ENCODE measurements at regions of chr4 and their contacts with region 1.

Region 1: DNA sequence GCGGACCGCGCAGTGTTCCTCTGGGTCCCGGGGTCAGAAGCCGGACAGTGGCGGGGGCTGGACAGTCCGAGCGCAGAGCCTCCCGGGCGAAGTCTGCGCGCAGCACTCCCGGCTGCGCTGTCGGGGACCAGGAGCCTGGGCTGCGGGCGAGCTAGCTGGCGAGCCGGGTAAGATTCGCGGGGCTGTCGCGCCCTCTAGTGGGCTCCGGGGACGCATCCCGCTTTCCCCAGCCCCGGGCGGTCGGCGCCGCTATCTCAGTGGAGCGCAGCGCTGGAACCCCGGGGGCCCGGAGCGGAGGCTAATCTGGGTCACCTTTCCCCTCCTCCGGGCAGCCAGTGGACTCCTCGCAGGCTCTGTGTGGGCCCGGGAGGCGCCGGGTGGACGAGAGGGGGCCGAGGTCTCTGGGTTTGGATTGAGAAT is 4.2 kb downstream of the PDGFRA start:
- DNase-seq: peak; percentile 83
- H3K27ac ChIP-seq: no peak overlapping the region
- CTCF ChIP-seq: peak; percentile 73

Region 2: DNA sequence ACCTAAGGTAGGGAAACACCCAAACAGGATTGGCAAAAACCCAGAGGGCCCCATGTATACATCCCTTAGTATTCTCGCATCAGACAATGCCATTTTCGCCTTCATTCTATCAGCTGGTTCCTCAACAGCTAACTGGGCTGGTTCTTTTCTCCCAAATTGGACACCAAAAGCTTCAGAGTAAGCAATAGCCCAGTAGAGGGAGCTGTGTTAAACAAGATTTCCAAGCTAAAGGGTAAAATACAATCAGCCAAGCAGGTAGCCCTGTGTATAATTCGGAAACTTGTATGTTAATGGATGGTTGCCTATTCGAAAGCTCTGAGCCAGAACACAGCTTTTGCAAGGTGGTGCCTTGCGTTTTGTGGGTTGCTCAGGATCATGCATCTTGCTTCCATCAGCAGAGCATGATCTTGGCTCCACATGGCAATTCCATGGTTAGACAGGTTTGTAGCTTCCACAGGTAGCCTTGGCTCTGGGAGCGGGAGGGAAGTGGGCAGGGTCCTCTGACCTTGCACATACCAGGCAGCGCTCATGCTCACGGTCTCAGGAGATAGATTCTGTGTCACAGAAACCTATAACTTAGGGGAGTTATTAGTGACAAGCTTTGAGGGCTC is 526.8 kb before region 1 on chr4:
- CTCF ChIA-PET with region 1: interaction called, 17 read pairs
- POLR2A ChIA-PET with region 1: no interaction called
- DNase-seq: peak; percentile 30
- H3K27ac ChIP-seq: no peak overlapping the region
- CTCF ChIP-seq: peak; percentile 31

Region 3: GRCh38 chr4:53908661-53909078 is 324.6 kb before region 1 on chr4:
- CTCF ChIA-PET with region 1: interaction called, 28 read pairs
- POLR2A ChIA-PET with region 1: no interaction called
- DNase-seq: peak; percentile 77
- H3K27ac ChIP-seq: no peak overlapping the region
- CTCF ChIP-seq: peak; percentile 78

Region 4: DNA sequence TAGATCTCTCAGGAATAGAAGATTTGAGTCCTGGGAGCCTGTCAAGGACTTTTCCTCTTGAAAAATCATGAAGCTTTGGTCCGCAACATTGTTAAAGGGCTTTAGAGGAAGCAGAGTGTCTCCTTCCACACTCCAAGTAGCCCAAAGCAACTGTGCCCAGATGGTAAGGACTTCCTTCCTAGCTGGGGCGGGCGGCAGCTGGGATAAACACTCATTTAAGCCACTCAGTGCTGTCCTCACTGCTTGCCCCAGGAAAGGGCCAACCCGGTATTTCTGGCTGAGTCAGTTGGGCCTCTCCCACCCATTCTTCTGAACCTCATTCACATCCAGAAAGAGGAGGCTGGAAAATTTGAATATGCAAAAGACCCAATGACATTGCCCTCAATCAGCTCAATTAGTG is 313.2 kb before region 1 on chr4:
- CTCF ChIA-PET with region 1: interaction called, 10 read pairs
- POLR2A ChIA-PET with region 1: no interaction called
- DNase-seq: no peak
- H3K27ac ChIP-seq: no peak overlapping the region
- CTCF ChIP-seq: no peak

Region 5: DNA sequence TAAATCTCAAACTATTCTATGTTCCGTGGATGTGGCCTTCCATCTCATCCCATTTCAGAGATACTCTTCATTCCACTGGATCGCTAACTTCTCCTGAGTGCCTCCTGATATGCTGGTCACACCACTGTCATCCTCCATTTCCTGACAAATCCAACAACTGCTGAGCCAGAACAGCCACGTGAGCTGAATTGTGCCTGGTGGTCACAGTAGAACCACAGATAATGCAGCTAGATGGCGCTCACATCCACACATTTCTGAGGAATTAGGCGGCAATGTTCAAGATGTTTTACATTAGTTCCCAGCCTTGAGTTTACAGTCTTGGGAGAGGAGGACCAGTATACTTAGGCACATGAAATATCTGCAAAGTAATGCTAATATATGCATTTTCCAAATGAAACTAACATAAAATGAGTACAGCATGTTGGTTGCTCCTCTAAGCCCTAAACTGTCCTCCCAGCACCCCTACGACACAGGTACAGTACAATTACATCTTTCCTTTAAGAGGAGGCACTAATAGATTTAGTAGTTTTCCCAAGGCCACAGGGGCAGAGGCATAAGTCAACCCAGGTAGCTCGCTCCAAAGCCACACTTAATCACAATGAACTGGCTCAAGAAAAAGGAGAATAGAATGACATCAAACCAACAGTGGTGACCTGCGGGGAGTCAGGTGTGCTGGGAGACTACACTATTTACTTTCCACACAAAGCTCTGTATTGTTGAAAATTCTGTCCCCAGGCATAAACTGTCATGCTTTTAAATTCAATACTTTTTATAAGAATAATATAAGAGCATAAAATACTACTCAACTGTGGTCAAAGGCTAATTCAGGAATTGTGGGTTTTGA is 303.1 kb before region 1 on chr4:
- CTCF ChIA-PET with region 1: interaction called, 11 read pairs
- POLR2A ChIA-PET with region 1: no interaction called
- DNase-seq: peak; percentile 82
- H3K27ac ChIP-seq: no peak overlapping the region
- CTCF ChIP-seq: peak; percentile 76

Region 6: DNA sequence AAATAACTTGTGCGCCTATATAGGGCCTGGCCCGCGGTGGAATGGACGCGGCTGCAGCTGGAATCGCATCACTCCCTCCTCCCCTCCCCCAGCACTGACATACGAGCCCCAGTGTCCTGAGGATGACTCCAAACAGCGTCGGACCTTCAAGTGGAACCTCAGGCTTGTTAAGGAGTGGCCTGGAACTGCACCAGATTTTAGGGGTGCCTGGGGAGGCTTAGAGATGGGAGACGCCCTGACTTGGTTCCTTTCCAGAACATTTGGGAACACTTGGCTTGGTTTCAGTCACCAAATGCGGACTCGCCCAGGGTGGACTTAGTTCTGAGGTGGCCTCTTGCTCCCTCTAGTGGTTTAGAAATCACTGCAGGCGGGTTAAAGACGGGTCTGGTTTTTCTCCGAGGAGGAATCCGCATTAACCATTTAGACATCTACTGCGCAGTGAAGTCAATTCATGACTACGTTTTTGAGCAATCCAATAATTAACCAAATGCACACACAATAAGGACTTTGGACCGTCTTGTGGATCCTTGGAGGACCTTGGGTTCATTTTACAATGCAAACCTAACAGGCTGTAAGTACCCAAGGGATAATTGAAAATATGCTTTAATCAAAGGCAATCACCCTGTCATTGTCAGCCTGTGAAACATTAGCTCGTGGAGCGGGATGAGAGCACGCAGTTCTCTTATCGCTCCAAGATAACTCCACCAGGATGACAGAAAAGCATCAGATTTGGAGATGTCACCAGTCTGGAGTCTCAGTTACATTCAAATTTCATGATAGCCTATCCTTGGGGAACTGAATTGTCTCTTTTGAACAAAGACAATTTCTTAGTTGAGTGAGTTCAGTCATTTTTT is 15.4 kb before region 1 on chr4:
- CTCF ChIA-PET with region 1: interaction called, 12 read pairs
- POLR2A ChIA-PET with region 1: no interaction called
- DNase-seq: peak; percentile 77
- H3K27ac ChIP-seq: peak overlapping the region; percentile 37
- CTCF ChIP-seq: peak; percentile 90